Testis (tissue), 5 donors: ENCODE measurements at regions of chr19 and their contacts with region 1.

Region 1: DNA sequence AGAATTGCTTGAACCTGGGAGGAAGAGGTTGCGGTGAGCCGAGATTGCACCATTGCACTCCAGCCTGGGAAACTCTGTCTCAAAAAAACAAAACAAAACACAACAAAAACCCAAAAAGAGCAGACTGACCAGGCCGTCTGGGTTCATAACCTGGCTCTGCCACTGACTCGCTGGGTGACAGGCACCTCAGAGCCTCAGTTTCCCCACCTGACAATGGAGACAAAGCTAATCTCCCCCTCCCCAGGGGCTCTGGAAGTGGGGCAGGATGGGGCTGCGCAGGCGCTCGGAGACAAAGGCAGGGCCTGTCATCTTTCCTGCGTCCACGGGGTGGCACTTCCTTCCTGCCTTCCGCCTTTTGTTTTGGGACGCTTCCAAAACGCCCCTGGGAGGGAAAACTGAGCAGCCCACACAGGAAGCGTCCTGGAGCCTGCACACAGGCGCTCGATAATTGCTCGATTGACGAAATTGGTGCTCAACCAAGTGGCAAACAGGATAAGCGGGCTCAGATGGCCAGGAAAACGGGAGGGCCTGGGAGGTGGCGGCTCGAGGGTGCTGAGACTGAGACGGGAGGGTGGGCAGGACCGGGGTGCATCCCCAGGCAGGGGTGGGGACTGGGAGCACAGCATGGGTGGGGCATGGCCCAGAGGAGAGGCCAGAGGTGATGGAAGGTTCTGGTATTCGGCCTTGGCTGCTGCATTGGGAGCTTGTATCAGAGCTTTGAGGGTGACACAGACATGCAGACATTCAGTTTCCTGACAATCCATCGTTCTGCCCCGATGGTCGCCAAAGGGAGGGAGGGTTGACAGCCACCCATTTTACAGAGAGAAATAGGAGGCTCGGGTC is 17.8 kb downstream of the SPC24 start:
- DNase-seq: peak; percentile 84
- H3K4me3 ChIP-seq: no peak overlapping the region
- H3K27ac ChIP-seq: peak overlapping the region; percentile 61 to 88
- H3K4me1 ChIP-seq: peaks cover 38% of the 10 kb centered on the region
- H3K27me3 ChIP-seq: no peaks in the 10 kb centered on the region
- CTCF ChIP-seq: peak; percentile 74 to 87 (median 83)
- POLR2A ChIP-seq: no peak

Region 2: GRCh38 chr19:11203194-11204075 is 65.7 kb after region 1 on chr19:
- intact Hi-C with region 1: loop called (anchors 2 kb)
- DNase-seq: peak; percentile 88
- H3K4me3 ChIP-seq: no peak overlapping the region
- H3K27ac ChIP-seq: peak overlapping the region; percentile 85 to 86
- H3K4me1 ChIP-seq: peaks cover 24% of the 10 kb centered on the region
- H3K27me3 ChIP-seq: no peaks in the 10 kb centered on the region
- CTCF ChIP-seq: peak; percentile 74 to 89 (median 80)
- POLR2A ChIP-seq: no peak

Region 3: GRCh38 chr19:11288343-11288742 is 150.6 kb after region 1 on chr19:
- intact Hi-C with region 1: loop called (anchors 10 kb)
- DNase-seq: no peak
- H3K4me3 ChIP-seq: no peak overlapping the region
- H3K27ac ChIP-seq: no peak overlapping the region
- H3K4me1 ChIP-seq: peaks cover 7% of the 10 kb centered on the region
- H3K27me3 ChIP-seq: no peaks in the 10 kb centered on the region
- CTCF ChIP-seq: peak in 2 of 3 experiments; percentile 41 to 52
- POLR2A ChIP-seq: no peak

Region 4: DNA sequence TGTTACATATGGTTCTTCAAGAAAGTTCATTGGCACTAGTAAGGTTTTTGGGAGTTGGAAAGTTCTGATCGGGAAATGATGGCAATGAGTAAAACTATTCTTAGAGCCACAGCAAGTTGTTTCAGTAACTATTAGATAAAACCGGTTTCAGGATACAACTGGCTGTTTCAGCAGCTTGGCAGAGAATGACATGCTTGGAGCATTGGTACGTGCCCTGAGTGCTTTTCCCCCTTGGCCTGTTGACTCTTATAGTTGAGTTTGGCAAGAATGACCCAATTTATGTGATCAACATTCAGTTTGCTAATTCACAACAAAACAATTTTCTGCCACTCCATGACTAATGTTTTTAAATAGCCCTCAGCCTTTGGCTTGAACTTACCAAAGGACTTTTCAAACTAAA is 649.8 kb after region 1 on chr19:
- intact Hi-C with region 1: no loop called
- DNase-seq: no peak
- H3K4me3 ChIP-seq: no peak overlapping the region
- H3K27ac ChIP-seq: no peak overlapping the region
- H3K4me1 ChIP-seq: no peaks in the 10 kb centered on the region
- H3K27me3 ChIP-seq: no peaks in the 10 kb centered on the region
- CTCF ChIP-seq: no peak
- POLR2A ChIP-seq: no peak